Activated B cell treated with CpG ODN at 0.5 μM for 24 hours (primary cell): ENCODE measurements at regions of chr12 and their contacts with region 1.

Region 1: DNA sequence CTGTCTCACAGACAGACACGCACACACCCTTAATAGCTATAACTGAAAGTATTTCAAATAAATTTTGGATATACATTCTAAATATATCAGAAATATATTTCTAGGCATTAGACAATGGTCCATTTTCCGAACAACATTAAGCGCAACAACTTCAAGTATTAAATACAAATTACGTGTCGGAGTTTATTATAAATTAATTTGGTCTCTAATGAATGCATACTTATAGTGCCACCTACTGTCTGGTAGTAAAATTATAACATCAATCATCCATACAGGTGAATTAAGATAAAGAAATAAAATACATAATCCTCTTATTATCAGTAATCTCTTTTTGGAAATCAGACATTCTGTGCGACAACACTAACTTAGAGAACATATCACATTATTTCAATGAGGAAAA is 27.2 kb upstream of the CMAS start:
- DNase-seq: no peak
- ATAC-seq: no peak
- H3K4me3 Mint-ChIP-seq: no peak overlapping the region
- H3K27ac Mint-ChIP-seq: no peak overlapping the region
- H3K4me1 Mint-ChIP-seq: no peaks in the 10 kb centered on the region
- H3K27me3 Mint-ChIP-seq: no peaks in the 10 kb centered on the region
- CTCF ChIP-seq: no peak

Region 2: DNA sequence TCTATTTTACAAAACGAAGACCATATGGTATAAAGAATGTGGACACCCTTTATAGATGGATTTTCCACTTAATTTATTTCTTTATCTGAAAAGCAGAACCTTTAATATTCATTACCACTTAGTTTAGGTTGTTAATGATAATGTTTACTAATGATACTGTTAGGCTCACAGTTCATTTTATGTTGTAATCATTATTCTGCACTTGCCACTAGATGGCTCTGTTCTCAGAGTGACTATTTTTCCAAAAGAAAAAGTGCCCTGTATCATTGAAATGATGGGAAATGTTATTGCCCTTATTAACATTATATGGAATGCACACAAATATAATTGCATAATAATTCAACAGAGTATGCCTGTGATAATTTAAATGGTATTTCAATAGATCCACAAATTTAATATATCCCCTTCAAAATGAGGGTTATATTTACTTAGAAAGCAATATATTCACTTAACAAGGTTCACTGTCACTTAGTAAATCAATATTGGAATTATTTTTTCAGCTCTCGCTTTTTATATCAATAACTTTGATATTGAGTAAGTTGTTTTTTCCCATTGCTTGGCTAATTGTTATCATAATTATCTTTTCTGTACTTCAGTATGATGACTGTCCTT is 1554.8 kb before region 1 on chr12:
- CTCF ChIA-PET with region 1: no interaction called
- POLR2A ChIA-PET with region 1: no interaction called
- intact Hi-C with region 1: loop called (anchors 10 kb)
- DNase-seq: no peak
- ATAC-seq: no peak
- H3K4me3 Mint-ChIP-seq: no peak overlapping the region
- H3K27ac Mint-ChIP-seq: no peak overlapping the region
- H3K4me1 Mint-ChIP-seq: no peaks in the 10 kb centered on the region
- H3K27me3 Mint-ChIP-seq: no peaks in the 10 kb centered on the region
- CTCF ChIP-seq: no peak

Region 3: GRCh38 chr12:20646239-20646827 is 1372.5 kb before region 1 on chr12:
- CTCF ChIA-PET with region 1: no interaction called
- POLR2A ChIA-PET with region 1: no interaction called
- intact Hi-C with region 1: loop called (anchors 5 kb)
- DNase-seq: no peak
- ATAC-seq: no peak
- H3K4me3 Mint-ChIP-seq: no peak overlapping the region
- H3K27ac Mint-ChIP-seq: no peak overlapping the region
- H3K4me1 Mint-ChIP-seq: no peaks in the 10 kb centered on the region
- H3K27me3 Mint-ChIP-seq: no peaks in the 10 kb centered on the region
- CTCF ChIP-seq: no peak

Region 4: DNA sequence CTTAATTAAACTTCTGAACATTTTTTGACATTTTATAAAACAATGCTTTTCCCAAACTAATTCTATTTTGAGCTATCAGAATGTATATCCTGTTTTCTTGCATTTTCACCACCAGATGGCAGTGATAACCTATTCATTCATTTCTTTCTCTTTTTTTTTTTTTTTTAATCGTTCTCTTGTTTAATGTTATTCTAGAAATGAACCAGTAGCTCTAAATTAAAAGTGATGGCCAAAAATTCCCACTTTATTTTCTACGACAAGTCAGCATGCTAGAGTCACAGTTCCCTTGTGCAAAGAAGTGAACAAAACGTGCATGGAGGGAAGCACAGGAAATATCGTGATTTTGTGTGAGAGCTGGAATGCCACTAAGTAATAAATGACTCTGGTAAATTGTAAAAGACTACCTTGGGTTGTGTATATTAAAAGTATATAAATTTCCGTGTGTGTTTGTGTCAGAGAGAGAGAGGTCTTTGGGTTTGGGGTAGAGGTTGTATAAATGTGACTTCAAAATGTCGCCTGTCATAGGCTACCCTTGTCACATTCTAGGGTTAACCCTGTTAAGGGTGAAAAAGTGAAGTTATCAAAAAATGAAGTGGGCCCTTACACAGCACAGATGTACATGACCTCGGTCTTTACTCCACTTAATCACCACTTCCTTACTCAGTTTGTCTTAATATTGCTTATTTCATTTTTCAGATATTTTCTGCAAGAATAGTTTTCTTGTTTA is 320.8 kb before region 1 on chr12:
- CTCF ChIA-PET with region 1: interaction called, 9 read pairs
- POLR2A ChIA-PET with region 1: no interaction called
- intact Hi-C with region 1: loop called (anchors 1 kb)
- DNase-seq: no peak
- ATAC-seq: no peak
- H3K4me3 Mint-ChIP-seq: no peak overlapping the region
- H3K27ac Mint-ChIP-seq: no peak overlapping the region
- H3K4me1 Mint-ChIP-seq: no peaks in the 10 kb centered on the region
- H3K27me3 Mint-ChIP-seq: peaks cover under 1% of the 10 kb centered on the region
- CTCF ChIP-seq: no peak

Region 5: DNA sequence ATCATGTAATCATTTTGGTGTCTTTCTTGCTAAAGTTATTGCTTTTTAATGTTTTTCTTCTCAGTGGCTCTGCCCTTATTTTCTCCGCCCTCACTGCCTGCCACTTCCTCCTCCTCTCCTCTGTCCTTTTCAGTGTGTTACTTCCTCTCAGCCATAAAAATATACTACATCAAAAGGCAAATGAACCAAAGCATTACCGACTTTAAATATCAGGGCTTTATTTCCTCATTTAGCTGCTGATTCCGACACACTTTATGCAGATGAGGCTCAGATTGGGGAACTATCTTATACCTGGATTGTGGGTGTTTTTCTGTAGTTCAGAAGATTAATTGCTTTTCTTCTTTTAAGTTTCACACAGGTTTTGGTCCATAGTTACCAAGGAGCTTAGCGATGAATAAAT is 145.3 kb after region 1 on chr12:
- CTCF ChIA-PET with region 1: no interaction called
- POLR2A ChIA-PET with region 1: no interaction called
- intact Hi-C with region 1: no loop called
- DNase-seq: no peak
- ATAC-seq: peak; percentile 90
- H3K4me3 Mint-ChIP-seq: peak overlapping the region; percentile 25
- H3K27ac Mint-ChIP-seq: peak overlapping the region; percentile 41
- H3K4me1 Mint-ChIP-seq: peaks cover 33% of the 10 kb centered on the region
- H3K27me3 Mint-ChIP-seq: no peaks in the 10 kb centered on the region
- CTCF ChIP-seq: no peak